ENCODE measurements at regions of chr5 and their contacts with region 1.

Region 1: GRCh38 chr5:100758780-100759179 is 144.3 kb downstream of the ST8SIA4 start:
- DNase-seq: no peak
- ATAC-seq: no peak
- H3K4me3 ChIP-seq: no peak overlapping the region
- H3K4me3 Mint-ChIP-seq: no peak overlapping the region
- H3K27ac ChIP-seq: no peak overlapping the region
- H3K27ac Mint-ChIP-seq: no peak overlapping the region
- H3K4me1 ChIP-seq: no peaks in the 10 kb centered on the region
- H3K4me1 Mint-ChIP-seq: no peaks in the 10 kb centered on the region
- H3K27me3 ChIP-seq: peaks cover 0 to 2% (median 0%) of the 10 kb centered on the region in 4 experiments
- H3K27me3 Mint-ChIP-seq: no peaks in the 10 kb centered on the region
- CTCF ChIP-seq: no peak

Region 2: GRCh38 chr5:100746730-100747129 is 12.1 kb before region 1 on chr5:
- CTCF ChIA-PET with region 1: no interaction called
- POLR2A ChIA-PET with region 1: no interaction called
- intact Hi-C with region 1: no loop called
- DNase-seq: peak; percentile 14
- ATAC-seq: no peak
- H3K4me3 ChIP-seq: peak overlapping the region in 1 of 5 experiments; percentile 9
- H3K4me3 Mint-ChIP-seq: no peak overlapping the region
- H3K27ac ChIP-seq: no peak overlapping the region
- H3K27ac Mint-ChIP-seq: no peak overlapping the region
- H3K4me1 ChIP-seq: peaks cover 4 to 8% of the 10 kb centered on the region in 2 donors
- H3K4me1 Mint-ChIP-seq: peaks cover 6% of the 10 kb centered on the region
- H3K27me3 ChIP-seq: no peaks in the 10 kb centered on the region
- H3K27me3 Mint-ChIP-seq: peaks cover 4% of the 10 kb centered on the region
- CTCF ChIP-seq: no peak

Region 3: GRCh38 chr5:100803397-100803796 is 44.6 kb after region 1 on chr5:
- CTCF ChIA-PET with region 1: no interaction called
- POLR2A ChIA-PET with region 1: no interaction called
- intact Hi-C with region 1: loop called (anchors 5 kb)
- DNase-seq: no peak
- ATAC-seq: no peak
- H3K4me3 ChIP-seq: no peak overlapping the region
- H3K4me3 Mint-ChIP-seq: no peak overlapping the region
- H3K27ac ChIP-seq: no peak overlapping the region
- H3K27ac Mint-ChIP-seq: peak overlapping the region; percentile 27
- H3K4me1 ChIP-seq: peaks cover 0 to 9% of the 10 kb centered on the region in 2 donors
- H3K4me1 Mint-ChIP-seq: peaks cover 20% of the 10 kb centered on the region
- H3K27me3 ChIP-seq: no peaks in the 10 kb centered on the region
- H3K27me3 Mint-ChIP-seq: no peaks in the 10 kb centered on the region
- CTCF ChIP-seq: no peak

Measured in B cell (primary cell).